Ascending aorta (tissue), 2 donors: ENCODE measurements at regions of chr6 and their contacts with region 1.

Region 1: DNA sequence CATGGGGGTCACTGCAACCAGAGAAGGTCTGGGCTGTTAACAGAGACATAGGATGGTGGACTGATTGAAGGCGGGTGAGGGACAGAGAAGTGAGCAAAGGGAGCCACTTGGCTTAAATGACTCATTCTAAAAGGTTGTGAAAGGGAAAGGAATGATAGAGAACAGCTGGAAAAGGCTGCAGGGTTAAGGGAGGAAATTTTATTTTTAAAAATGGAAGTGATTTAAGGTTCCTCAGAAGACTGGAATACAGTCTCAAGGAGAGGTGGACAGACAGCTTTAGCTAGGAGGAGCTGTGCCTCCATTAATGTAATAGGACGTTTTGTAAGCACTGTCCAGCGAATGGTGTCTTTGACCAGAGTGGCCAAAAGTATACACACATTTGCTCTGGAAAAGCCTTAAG is 46.7 kb downstream of the RGS17 start:
- DNase-seq: no peak
- H3K4me3 ChIP-seq: no peak overlapping the region
- H3K27ac ChIP-seq: peak overlapping the region; percentile 47 to 62
- H3K4me1 ChIP-seq: peaks cover 0 to 29% of the 10 kb centered on the region in 2 donors
- H3K27me3 ChIP-seq: no peaks in the 10 kb centered on the region
- CTCF ChIP-seq: no peak

Region 2: GRCh38 chr6:153044295-153044694 is 40.1 kb before region 1 on chr6:
- intact Hi-C with region 1: loop called (anchors 5 kb)
- DNase-seq: no peak
- H3K4me3 ChIP-seq: no peak overlapping the region
- H3K27ac ChIP-seq: no peak overlapping the region
- H3K4me1 ChIP-seq: peaks cover 0 to 2% of the 10 kb centered on the region in 2 donors
- H3K27me3 ChIP-seq: no peaks in the 10 kb centered on the region
- CTCF ChIP-seq: no peak

Region 3: GRCh38 chr6:153108315-153108714 is 23.9 kb after region 1 on chr6:
- intact Hi-C with region 1: loop called (anchors 2 kb)
- DNase-seq: no peak
- H3K4me3 ChIP-seq: no peak overlapping the region
- H3K27ac ChIP-seq: no peak overlapping the region
- H3K4me1 ChIP-seq: peaks cover 0 to 18% of the 10 kb centered on the region in 2 donors
- H3K27me3 ChIP-seq: no peaks in the 10 kb centered on the region
- CTCF ChIP-seq: peak; percentile 10 to 68 (median 46)